ENCODE measurements at regions of chr22 and their contacts with region 1.

Region 1: DNA sequence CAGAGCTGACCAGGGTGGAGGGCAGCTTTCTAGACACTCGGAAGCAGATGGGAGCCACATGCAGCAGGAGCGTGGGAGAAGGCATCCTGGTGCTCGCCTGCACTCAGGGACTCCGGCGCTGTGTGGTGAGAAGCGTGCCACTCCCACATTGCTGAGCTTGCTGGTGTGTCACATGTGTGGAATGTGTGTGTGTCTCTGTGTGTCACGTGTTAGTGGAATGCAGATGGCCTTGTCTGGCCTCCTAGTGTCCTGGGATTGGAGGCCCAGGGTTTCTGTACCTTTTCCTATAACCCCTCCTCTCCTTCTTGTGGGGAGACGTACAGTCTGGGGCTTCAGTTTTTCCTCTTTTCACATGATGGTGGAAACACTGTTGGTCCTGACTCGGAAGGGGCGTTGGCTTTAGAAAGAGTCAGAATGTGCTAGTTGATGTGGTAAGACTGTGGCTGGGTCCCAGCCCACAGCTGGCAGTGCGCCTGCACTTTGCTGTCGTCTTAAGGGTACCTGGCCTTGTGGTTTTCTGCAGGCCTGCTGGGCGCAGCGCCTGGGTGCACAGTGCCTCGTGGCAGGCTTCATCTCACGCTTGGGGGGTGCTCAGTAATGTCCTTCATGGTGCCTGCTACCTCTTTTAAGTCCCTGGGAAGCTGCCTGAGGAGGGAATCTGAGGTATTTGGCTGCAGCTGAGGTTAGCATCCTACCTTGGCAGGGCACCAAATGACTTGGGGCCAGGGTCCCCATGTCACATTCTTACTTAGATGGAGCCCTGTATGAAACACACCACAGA is 61.8 kb downstream of the MED15 start:
- DNase-seq: peak; percentile 97
- H3K4me3 ChIP-seq: no peak overlapping the region
- CTCF ChIP-seq: no peak

Region 2: DNA sequence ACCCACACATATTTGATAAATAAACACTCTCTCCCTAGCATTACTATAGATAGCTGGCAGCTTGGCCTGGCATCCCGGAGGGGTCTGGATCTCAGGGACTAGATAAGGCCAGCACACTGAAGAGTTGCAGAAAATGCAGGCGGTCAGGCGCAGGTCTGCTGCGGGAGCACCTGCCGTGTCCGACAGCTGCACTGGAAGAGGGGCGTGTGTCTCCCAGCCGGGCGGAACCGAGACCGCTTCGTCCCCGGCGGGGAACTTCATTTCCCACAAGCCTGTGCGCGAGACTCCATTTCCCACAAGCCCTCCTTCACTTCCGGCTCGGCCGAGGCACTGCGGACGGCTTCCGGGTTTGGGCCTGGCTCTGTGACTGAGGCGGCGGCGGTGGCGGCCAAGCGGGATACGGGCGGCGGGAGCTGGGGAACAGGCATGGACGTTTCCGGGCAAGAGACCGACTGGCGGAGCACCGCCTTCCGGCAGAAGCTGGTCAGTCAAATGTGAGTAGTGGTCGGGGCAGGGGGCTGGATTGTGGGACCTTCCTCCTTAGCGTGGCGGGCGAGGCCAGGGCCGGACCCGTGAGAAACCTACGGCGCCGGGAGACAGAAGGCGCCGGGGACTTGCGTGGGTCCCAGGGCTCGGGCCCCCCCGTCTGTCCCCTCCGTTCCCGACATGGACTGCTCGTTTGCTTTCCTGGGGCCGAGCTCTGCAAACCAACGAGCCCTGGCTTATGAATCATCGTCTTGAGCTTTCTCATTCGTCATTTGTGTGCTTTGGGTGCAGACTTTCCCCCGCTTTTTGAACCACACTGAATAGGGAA is 61.7 kb before region 1 on chr22 and contains the start of gene MED15:
- CTCF ChIA-PET with region 1: interaction called, 39 read pairs
- POLR2A ChIA-PET with region 1: interaction called, 13 read pairs
- DNase-seq: no peak
- H3K4me3 ChIP-seq: peak within 1 kb of the TSS; percentile 95
- CTCF ChIP-seq: no peak

Region 3: GRCh38 chr22:20523086-20523983 is 45.8 kb before region 1 on chr22:
- CTCF ChIA-PET with region 1: interaction called, 18 read pairs
- POLR2A ChIA-PET with region 1: interaction called, 6 read pairs
- DNase-seq: no peak
- H3K4me3 ChIP-seq: no peak overlapping the region
- CTCF ChIP-seq: no peak

Region 4: GRCh38 chr22:20537325-20537756 is 31.8 kb before region 1 on chr22:
- CTCF ChIA-PET with region 1: interaction called, 505 read pairs
- POLR2A ChIA-PET with region 1: interaction called, 16 read pairs
- DNase-seq: no peak
- H3K4me3 ChIP-seq: no peak overlapping the region
- CTCF ChIP-seq: no peak

Measured in AG04449 (cell line).